ENCODE measurements at regions of chr16 and their contacts with region 1.

Region 1: GRCh38 chr16:70380861-70381603 is 34.3 kb downstream of the DDX19A start:
- DNase-seq: peak; percentile 99
- H3K4me3 Mint-ChIP-seq: peak overlapping the region; percentile 90
- H3K27ac Mint-ChIP-seq: peak overlapping the region; percentile 83
- H3K4me1 Mint-ChIP-seq: no peaks in the 10 kb centered on the region
- H3K27me3 Mint-ChIP-seq: no peaks in the 10 kb centered on the region
- CTCF ChIP-seq: peak; percentile 39

Region 2: GRCh38 chr16:69942627-69943170 is 438.3 kb before region 1 on chr16:
- CTCF ChIA-PET with region 1: no interaction called
- POLR2A ChIA-PET with region 1: no interaction called
- intact Hi-C with region 1: no loop called
- DNase-seq: no peak
- H3K4me3 Mint-ChIP-seq: no peak overlapping the region
- H3K27ac Mint-ChIP-seq: no peak overlapping the region
- H3K4me1 Mint-ChIP-seq: no peaks in the 10 kb centered on the region
- H3K27me3 Mint-ChIP-seq: no peaks in the 10 kb centered on the region
- CTCF ChIP-seq: no peak

Region 3: GRCh38 chr16:70324998-70325747 is 55.9 kb before region 1 on chr16:
- CTCF ChIA-PET with region 1: no interaction called
- POLR2A ChIA-PET with region 1: no interaction called
- intact Hi-C with region 1: no loop called
- DNase-seq: no peak
- H3K4me3 Mint-ChIP-seq: no peak overlapping the region
- H3K27ac Mint-ChIP-seq: no peak overlapping the region
- H3K4me1 Mint-ChIP-seq: peaks cover 6% of the 10 kb centered on the region
- H3K27me3 Mint-ChIP-seq: no peaks in the 10 kb centered on the region
- CTCF ChIP-seq: no peak

Region 4: GRCh38 chr16:70348991-70349390 is 32.0 kb before region 1 on chr16:
- CTCF ChIA-PET with region 1: interaction called, 5 read pairs
- POLR2A ChIA-PET with region 1: interaction called, 40 read pairs
- intact Hi-C with region 1: no loop called
- DNase-seq: no peak
- H3K4me3 Mint-ChIP-seq: no peak overlapping the region
- H3K27ac Mint-ChIP-seq: no peak overlapping the region
- H3K4me1 Mint-ChIP-seq: peaks cover 6% of the 10 kb centered on the region
- H3K27me3 Mint-ChIP-seq: no peaks in the 10 kb centered on the region
- CTCF ChIP-seq: no peak

Region 5: DNA sequence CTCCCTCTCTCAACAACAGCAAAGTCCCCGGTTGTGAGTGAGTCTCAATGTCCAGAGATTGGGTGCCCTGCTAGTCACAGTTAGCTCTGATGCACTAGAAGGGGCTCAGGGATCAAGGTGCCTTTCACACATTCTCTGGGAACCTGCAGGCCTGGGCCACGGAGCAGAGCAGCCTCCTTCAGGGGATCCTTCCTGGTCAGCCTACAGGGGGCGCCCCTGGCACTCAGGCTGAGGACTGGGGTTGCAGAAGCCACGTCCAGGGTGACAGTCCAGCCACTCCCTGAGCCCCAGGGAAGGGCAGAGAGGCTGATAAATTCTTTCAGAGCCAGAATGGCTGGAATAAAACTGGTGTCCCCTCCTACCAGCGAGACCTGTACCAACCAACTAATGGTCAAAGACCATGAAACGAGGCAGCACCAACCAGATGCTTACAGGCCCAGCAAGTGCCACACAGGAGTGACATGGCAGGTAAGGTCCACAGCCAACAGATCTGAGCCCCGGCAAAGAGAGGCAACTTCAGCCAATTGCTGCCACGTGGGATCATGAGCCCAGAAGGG is 14.4 kb after region 1 on chr16:
- CTCF ChIA-PET with region 1: interaction called, 3 read pairs
- POLR2A ChIA-PET with region 1: interaction called, 55 read pairs
- intact Hi-C with region 1: no loop called
- DNase-seq: peak; percentile 64
- H3K4me3 Mint-ChIP-seq: no peak overlapping the region
- H3K27ac Mint-ChIP-seq: no peak overlapping the region
- H3K4me1 Mint-ChIP-seq: peaks cover 14% of the 10 kb centered on the region
- H3K27me3 Mint-ChIP-seq: no peaks in the 10 kb centered on the region
- CTCF ChIP-seq: peak; percentile 59

Region 6: DNA sequence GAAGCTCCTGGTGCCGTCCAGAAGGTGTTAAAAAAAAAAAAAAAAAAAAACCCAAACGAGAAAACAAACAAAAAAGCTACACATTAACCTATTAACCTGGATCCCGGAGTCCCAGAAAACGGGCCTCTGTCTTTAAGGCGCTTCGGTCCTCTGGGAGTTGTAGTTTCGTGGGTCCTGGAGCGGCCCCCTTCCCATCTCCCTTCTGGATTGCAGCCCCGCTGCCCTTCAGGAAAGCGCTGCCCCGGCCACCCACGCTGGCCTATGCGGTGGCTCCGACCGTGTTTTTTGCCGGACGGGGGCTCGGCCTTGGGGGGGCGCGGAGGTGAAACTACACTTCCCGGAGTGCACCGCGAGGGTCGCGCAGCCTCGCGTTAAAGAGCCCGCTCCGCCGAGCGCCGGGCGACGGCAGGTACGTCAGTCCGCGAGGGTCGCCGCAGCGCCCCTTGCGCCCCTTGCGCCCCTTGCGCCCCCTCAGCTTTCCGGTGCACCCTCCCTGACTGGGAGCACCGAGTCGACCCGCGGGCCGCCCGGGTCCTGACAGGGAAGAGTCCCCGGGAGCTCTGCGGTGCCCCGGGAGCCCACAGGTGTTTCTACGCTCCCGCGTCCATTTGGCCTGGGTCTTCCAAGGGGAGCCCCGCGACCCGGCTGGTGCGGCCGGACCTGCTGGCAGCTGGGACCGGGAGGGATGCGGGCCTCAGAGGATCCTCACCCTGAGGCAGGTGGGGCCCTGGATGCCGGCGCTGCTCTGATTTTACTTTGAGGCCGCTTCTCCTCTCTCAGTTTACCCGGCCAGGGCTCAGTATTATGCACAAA is 73.4 kb after region 1 on chr16 and contains the start of gene FCSK:
- CTCF ChIA-PET with region 1: interaction called, 7 read pairs
- POLR2A ChIA-PET with region 1: interaction called, 55 read pairs
- intact Hi-C with region 1: loop called (anchors 2 kb)
- DNase-seq: peak; percentile 75
- H3K4me3 Mint-ChIP-seq: peak within 1 kb of the TSS; percentile 92
- H3K27ac Mint-ChIP-seq: peak within 1 kb of the TSS; percentile 89
- H3K4me1 Mint-ChIP-seq: peaks cover 6% of the 10 kb centered on the region
- H3K27me3 Mint-ChIP-seq: no peaks in the 10 kb centered on the region
- CTCF ChIP-seq: no peak
- total RNA-seq, gene FCSK: 13.7 and 19.0 TPM in 2 replicates

Region 7: GRCh38 chr16:70478169-70478568 is 97.1 kb after region 1 on chr16:
- CTCF ChIA-PET with region 1: interaction called, 4 read pairs
- POLR2A ChIA-PET with region 1: interaction called, 16 read pairs
- intact Hi-C with region 1: no loop called
- DNase-seq: no peak
- H3K4me3 Mint-ChIP-seq: no peak overlapping the region
- H3K27ac Mint-ChIP-seq: no peak overlapping the region
- H3K4me1 Mint-ChIP-seq: peaks cover 8% of the 10 kb centered on the region
- H3K27me3 Mint-ChIP-seq: no peaks in the 10 kb centered on the region
- CTCF ChIP-seq: no peak